ENCODE measurements at regions of chr22 and their contacts with region 1.

Region 1: GRCh38 chr22:17171313-17172171 is 12.5 kb upstream of the HDHD5 start:
- DNase-seq: peak; percentile 89
- H3K4me3 ChIP-seq: peak overlapping the region; percentile 13 to 53 (median 46)
- H3K27ac ChIP-seq: peak overlapping the region; percentile 84
- H3K4me1 ChIP-seq: peaks cover 2% of the 10 kb centered on the region
- H3K27me3 ChIP-seq: no peaks in the 10 kb centered on the region
- CTCF ChIP-seq: peak; percentile 68 to 95
- POLR2A ChIP-seq: no peak

Region 2: DNA sequence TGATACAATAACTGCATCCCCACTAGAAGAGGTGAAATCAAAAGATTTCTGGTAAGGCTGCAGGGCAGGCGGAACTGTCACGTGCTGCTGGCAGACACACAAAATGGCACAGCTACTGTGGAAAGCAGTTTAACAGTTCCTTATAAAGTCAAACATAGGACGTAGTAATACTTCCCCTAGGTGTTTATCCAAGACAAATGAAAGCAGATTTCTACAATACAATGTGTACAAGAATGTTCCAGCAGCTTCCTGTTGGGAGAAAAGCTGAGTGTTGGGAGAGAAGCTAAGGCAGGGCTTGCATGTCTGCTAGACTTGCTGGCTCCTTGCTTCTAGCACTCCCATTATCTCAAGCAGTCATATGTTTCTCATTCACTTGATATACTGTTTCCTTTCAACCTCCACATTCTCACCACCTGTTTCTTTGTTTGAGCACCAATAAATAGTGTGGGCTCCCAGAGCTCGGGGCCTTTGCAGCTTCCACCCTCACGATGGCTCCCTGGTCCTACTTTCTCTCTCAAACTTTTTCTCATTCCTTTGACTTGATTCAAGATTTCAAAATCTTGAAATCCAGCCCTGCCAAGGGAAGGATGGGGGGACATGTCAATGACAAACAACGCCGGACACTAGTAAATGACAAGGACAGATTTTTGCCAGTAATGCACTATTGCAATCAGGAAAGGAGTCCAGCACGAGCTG is 108.0 kb before region 1 on chr22:
- CTCF ChIA-PET with region 1: interaction called, 18 read pairs
- POLR2A ChIA-PET with region 1: interaction called, 3 read pairs
- dilution Hi-C with region 1: no loop called
- intact Hi-C with region 1: loop called (anchors 1 kb)
- DNase-seq: peak; percentile 95
- H3K4me3 ChIP-seq: peak overlapping the region in 1 of 3 experiments; percentile 19
- H3K27ac ChIP-seq: peak overlapping the region; percentile 92
- H3K4me1 ChIP-seq: peaks cover 33% of the 10 kb centered on the region
- H3K27me3 ChIP-seq: peaks cover 0 to 8% of the 10 kb centered on the region in 2 experiments
- CTCF ChIP-seq: no peak
- POLR2A ChIP-seq: peak; percentile 34

Region 3: GRCh38 chr22:17084554-17085276 is 86.8 kb before region 1 on chr22 and contains the start of gene IL17RA:
- CTCF ChIA-PET with region 1: interaction called, 16 read pairs
- POLR2A ChIA-PET with region 1: no interaction called
- dilution Hi-C with region 1: no loop called
- intact Hi-C with region 1: no loop called
- DNase-seq: peak; percentile 85
- H3K4me3 ChIP-seq: peak within 1 kb of the TSS; percentile 62 to 65 (median 64)
- H3K27ac ChIP-seq: peak within 1 kb of the TSS; percentile 52
- H3K4me1 ChIP-seq: peaks cover 18% of the 10 kb centered on the region
- H3K27me3 ChIP-seq: no peaks in the 10 kb centered on the region
- CTCF ChIP-seq: no peak
- POLR2A ChIP-seq: peak; percentile 76
- total RNA-seq, gene IL17RA: 13.0 and 19.0 TPM in 2 replicates

Region 4: GRCh38 chr22:17158568-17159503 is 12.7 kb before region 1 on chr22 and contains the start of gene HDHD5:
- CTCF ChIA-PET with region 1: interaction called, 77 read pairs
- POLR2A ChIA-PET with region 1: no interaction called
- dilution Hi-C with region 1: no loop called
- intact Hi-C with region 1: loop called (anchors 1 kb)
- DNase-seq: peak; percentile 79
- H3K4me3 ChIP-seq: peak within 1 kb of the TSS; percentile 38 to 57 (median 57)
- H3K27ac ChIP-seq: peak within 1 kb of the TSS; percentile 41
- H3K4me1 ChIP-seq: peaks cover 15% of the 10 kb centered on the region
- H3K27me3 ChIP-seq: no peaks in the 10 kb centered on the region
- CTCF ChIP-seq: no peak
- POLR2A ChIP-seq: no peak
- total RNA-seq, gene HDHD5: 28.1 and 29.1 TPM in 2 replicates

Region 5: GRCh38 chr22:17199003-17199731 is 27.6 kb after region 1 on chr22:
- CTCF ChIA-PET with region 1: interaction called, 48 read pairs
- POLR2A ChIA-PET with region 1: interaction called, 3 read pairs
- dilution Hi-C with region 1: no loop called
- intact Hi-C with region 1: loop called (anchors 1 kb)
- DNase-seq: no peak
- H3K4me3 ChIP-seq: peak overlapping the region; percentile 2 to 68 (median 48)
- H3K27ac ChIP-seq: peak overlapping the region; percentile 55
- H3K4me1 ChIP-seq: peaks cover 13% of the 10 kb centered on the region
- H3K27me3 ChIP-seq: peaks cover 2 to 3% of the 10 kb centered on the region in 2 experiments
- CTCF ChIP-seq: no peak
- POLR2A ChIP-seq: no peak

Region 6: DNA sequence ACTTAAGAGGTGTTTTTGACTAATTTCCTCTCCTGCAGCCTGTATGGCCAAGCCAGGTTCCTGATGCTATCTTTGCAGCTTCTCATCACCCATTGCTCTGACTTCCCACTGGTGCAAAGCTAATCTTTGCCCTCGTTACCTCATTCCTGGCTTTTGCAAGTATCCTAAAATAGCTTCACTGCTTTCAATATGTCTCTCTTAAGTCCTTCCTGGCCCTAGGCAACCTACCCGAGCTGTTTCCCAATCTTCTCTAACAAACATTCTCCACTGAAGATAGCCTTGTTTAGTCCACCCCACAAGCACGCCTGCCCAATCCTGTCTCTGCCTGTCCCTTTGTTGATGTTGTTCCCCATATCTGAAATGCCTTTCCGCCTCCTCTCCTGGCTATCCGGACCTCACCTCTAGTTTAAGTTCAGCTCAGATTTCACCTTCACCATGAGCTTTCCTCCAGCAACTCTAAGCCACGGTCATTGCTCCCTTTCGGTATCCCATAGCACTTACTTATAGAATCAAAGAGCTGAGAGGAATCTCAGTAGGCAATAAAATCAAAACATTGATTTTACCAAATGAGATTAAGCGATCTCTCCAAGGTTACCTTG is 167.7 kb after region 1 on chr22:
- CTCF ChIA-PET with region 1: interaction called, 3 read pairs
- POLR2A ChIA-PET with region 1: no interaction called
- dilution Hi-C with region 1: no loop called
- intact Hi-C with region 1: loop called (anchors 10 kb)
- DNase-seq: no peak
- H3K4me3 ChIP-seq: no peak overlapping the region
- H3K27ac ChIP-seq: no peak overlapping the region
- H3K4me1 ChIP-seq: no peaks in the 10 kb centered on the region
- H3K27me3 ChIP-seq: peaks cover 2 to 4% of the 10 kb centered on the region in 2 experiments
- CTCF ChIP-seq: no peak
- POLR2A ChIP-seq: no peak

Region 7: GRCh38 chr22:17492247-17492646 is 320.7 kb after region 1 on chr22:
- CTCF ChIA-PET with region 1: interaction called, 12 read pairs
- POLR2A ChIA-PET with region 1: no interaction called
- dilution Hi-C with region 1: no loop called
- intact Hi-C with region 1: no loop called
- DNase-seq: no peak
- H3K4me3 ChIP-seq: no peak overlapping the region
- H3K27ac ChIP-seq: no peak overlapping the region
- H3K4me1 ChIP-seq: no peaks in the 10 kb centered on the region
- H3K27me3 ChIP-seq: no peaks in the 10 kb centered on the region
- CTCF ChIP-seq: no peak
- POLR2A ChIP-seq: no peak

Measured in endothelial cell of umbilical vein (primary cell).